ENCODE measurements at regions of chr3 and their contacts with region 1.

Region 1: GRCh38 chr3:119463171-119464169 is at the start of gene TMEM39A:
- DNase-seq: peak; percentile 100
- total RNA-seq, gene TMEM39A: 18.3 TPM

Region 2: DNA sequence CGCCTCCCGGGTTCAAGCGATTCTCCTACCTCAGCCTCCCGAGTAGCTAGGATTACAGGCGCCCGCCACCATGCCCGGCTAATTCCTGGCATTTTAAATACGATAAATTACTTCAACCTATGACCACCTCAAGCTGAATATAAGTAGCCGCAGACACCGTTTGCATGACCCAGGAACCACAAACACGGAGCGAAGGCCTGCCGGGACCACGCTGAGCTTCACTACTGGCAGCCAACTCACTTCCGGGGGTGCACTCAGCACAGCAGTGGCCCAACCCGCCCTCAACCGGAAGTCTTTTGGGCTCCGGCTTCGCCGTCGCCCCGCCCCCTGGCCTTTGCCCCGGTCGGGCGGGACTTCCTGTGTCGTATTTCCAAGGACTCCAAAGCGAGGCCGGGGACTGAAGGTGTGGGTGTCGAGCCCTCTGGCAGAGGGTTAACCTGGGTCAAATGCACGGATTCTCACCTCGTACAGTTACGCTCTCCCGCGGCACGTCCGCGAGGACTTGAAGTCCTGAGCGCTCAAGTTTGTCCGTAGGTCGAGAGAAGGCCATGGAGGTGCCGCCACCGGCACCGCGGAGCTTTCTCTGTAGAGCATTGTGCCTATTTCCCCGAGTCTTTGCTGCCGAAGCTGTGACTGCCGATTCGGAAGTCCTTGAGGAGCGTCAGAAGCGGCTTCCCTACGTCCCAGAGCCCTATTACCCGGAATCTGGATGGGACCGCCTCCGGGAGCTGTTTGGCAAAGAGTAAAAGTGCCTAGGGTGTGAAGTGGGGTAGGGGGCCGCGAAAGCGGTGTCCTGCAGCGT is 34.9 kb after region 1 on chr3 and contains the start of gene TIMMDC1:
- intact Hi-C with region 1: loop called (anchors 1 kb)
- DNase-seq: peak; percentile 99
- total RNA-seq, gene TIMMDC1: 211 TPM

Region 3: GRCh38 chr3:119579366-119580165 is 116.1 kb after region 1 on chr3 and contains the start of gene ADPRH:
- intact Hi-C with region 1: loop called (anchors 5 kb)
- DNase-seq: peak; percentile 92
- total RNA-seq, gene ADPRH: 10.9 TPM